ENCODE measurements at regions of chr3 and their contacts with region 1.

Region 1: DNA sequence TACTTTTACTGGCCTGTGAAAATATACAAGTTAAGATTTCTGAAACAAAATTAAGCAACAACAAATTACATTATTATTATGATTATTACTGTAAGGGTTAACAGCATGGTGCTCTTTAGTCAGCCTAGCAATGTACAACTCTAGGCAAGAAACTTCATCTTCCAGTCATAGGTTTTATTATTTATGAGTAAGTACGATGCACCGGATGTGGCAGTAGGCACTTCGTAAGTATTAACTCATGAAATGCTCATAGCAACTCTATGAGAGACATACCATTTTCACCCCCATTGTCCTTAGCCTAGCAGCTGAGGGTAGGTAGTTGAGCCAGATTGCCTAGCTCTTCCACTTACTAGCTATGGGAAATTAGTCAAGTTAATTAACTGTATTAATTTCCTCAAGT is 68.0 kb upstream of the PTPRG start:
- DNase-seq: no peak
- H3K4me3 Mint-ChIP-seq: no peak overlapping the region
- H3K27ac Mint-ChIP-seq: no peak overlapping the region
- H3K4me1 Mint-ChIP-seq: no peaks in the 10 kb centered on the region
- H3K27me3 Mint-ChIP-seq: no peaks in the 10 kb centered on the region
- CTCF ChIP-seq: no peak

Region 2: DNA sequence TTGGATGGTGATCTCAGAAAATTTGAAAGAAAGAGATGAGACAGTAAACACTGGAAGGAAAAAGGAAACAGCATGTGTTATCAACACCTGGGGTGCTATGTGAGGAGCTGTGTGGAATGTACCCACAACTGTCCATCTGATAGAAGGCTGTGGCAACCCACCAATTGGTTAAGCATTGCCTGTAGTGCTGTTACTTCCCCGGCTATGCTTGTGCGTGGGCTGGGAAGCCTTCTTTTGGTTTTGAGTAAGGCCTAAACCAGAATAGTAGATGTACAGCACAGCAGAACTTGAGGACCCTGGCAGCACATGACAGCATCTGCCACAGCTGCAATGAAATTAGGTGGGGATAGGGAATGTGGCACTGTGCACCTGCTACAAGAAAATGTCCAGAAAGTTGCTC is 426.5 kb before region 1 on chr3:
- CTCF ChIA-PET with region 1: no interaction called
- intact Hi-C with region 1: no loop called
- DNase-seq: no peak
- H3K4me3 Mint-ChIP-seq: no peak overlapping the region
- H3K27ac Mint-ChIP-seq: no peak overlapping the region
- H3K4me1 Mint-ChIP-seq: no peaks in the 10 kb centered on the region
- H3K27me3 Mint-ChIP-seq: no peaks in the 10 kb centered on the region
- CTCF ChIP-seq: no peak

Region 3: GRCh38 chr3:61820306-61820992 is 327.1 kb after region 1 on chr3:
- CTCF ChIA-PET with region 1: interaction called, 13 read pairs
- intact Hi-C with region 1: no loop called
- DNase-seq: no peak
- H3K4me3 Mint-ChIP-seq: no peak overlapping the region
- H3K27ac Mint-ChIP-seq: no peak overlapping the region
- H3K4me1 Mint-ChIP-seq: no peaks in the 10 kb centered on the region
- H3K27me3 Mint-ChIP-seq: no peaks in the 10 kb centered on the region
- CTCF ChIP-seq: no peak

Measured in Calu3 (cell line).